Activated T-helper 2 cell treated with anti-CD3 and anti-CD28 coated beads, Interferon-gamma antibody, Interleukin-2, Interleukin-4, amounts not matched to agents 10 μg/mL and 5 μg/mL and 100 μg/mL, durations not matched to agents 14 hours and 24 hours and 36 hours (primary cell): ENCODE measurements at regions of chr4 and their contacts with region 1.

Region 1: DNA sequence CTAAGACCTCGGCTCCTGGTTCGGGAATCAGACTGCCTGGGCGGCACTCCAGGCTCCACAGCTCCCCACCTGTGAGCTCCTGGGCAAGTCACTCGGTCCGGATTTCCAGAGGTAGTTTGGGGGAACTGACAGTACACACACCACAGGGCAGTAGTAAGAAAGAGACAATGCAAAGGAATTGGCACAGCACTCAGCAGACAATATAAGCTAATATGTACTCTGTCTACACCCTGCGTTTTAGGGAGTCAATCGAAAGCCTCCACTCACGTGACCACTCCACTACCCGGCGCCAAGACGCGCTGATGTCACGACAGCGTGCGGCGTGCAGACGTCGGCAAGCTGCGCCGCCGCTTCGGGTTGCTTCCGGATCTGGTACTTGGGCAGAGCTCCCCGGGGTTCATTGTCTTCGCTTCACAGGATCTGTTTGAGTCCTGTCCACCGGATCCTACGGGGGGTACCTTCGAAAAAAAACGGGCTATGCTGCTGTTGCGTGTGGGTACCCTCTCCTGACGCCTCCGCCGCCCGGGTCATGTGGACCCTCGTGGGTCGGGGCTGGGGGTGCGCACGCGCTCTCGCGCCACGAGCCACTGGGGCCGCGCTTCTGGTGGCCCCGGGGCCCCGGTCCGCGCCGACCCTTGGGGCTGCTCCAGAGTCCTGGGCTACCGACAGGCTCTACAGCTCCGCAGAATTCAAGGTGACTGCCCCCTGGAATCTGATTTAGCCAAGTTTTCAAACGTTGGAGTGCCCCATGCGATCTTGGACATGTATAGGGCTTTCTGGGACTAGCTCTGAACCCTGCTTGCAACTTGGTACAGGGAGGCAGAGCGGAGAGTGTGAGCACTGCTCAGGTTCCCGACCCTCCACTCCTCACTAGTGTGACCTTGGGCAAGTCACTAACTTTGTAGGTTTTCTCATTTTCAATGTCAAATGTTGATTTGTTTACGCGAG is at the start of gene GUF1:
- DNase-seq: peak; percentile 87
- H3K4me3 Mint-ChIP-seq: peak within 1 kb of the TSS; percentile 94
- H3K27ac Mint-ChIP-seq: peak within 1 kb of the TSS; percentile 97
- H3K4me1 Mint-ChIP-seq: peaks cover 31% of the 10 kb centered on the region
- H3K27me3 Mint-ChIP-seq: peaks cover 2% of the 10 kb centered on the region
- total RNA-seq, gene GUF1: 30.7 and 33.2 TPM in 2 replicates

Region 2: DNA sequence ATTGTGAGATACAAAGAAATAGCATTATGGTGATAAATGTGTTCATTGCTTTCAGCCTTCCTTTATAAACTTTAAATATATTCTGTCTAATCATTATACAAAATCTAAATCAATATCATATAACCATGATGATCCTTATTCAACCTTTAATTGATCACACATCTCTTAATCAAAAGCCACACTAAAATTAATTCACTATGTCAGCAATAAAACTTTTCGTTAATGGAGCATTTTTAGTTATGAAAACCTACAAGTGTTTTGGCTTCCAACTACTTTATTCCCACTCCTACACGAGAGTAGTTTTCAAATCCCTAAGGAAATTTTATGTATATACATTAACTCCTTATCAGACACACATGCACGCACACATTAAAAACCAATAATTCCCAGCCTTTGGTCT is 760.0 kb before region 1 on chr4:
- intact Hi-C with region 1: no loop called
- DNase-seq: no peak
- H3K4me3 Mint-ChIP-seq: no peak overlapping the region
- H3K27ac Mint-ChIP-seq: no peak overlapping the region
- H3K4me1 Mint-ChIP-seq: no peaks in the 10 kb centered on the region
- H3K27me3 Mint-ChIP-seq: no peaks in the 10 kb centered on the region

Region 3: DNA sequence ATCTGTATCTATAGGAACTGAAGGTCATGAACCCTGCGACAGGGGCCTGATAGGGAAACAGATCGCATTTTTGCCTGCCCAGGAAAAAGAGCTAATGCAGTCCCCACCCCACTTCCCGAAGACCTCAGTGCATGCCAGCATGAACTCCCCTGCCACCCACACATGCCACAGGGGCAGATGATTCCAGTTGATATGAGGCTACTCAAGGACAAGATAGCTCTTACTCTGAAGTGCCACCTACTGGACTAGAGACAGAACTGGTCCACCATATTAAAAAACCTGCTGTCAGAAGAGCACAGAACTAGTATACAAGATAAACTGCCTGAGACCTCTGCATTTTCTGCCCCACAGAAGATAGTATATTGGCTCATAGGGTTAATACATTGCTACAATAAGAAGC is 95.0 kb before region 1 on chr4:
- intact Hi-C with region 1: no loop called
- DNase-seq: no peak
- H3K4me3 Mint-ChIP-seq: no peak overlapping the region
- H3K27ac Mint-ChIP-seq: no peak overlapping the region
- H3K4me1 Mint-ChIP-seq: no peaks in the 10 kb centered on the region
- H3K27me3 Mint-ChIP-seq: no peaks in the 10 kb centered on the region

Region 4: DNA sequence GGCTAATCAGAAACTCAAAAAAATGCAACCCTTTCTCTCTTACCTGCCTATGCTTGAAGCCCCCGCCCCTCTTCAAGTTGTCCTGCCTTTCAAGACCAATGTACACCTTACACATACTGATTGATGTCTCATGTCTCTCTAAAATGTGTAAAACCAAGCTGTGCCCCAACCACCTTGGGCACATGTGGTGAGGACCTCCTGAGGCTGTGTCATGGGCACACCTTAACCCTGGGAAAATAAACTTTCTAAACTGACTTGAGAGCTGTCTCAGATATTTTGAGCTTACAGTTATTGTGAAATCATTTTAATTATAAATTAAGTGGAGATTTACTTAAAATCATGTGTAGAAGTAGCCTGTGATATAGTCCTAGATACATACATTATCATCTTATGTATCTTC is 22.1 kb after region 1 on chr4:
- intact Hi-C with region 1: loop called (anchors 2 kb)
- DNase-seq: no peak
- H3K4me3 Mint-ChIP-seq: no peak overlapping the region
- H3K27ac Mint-ChIP-seq: no peak overlapping the region
- H3K4me1 Mint-ChIP-seq: peaks cover 5% of the 10 kb centered on the region
- H3K27me3 Mint-ChIP-seq: no peaks in the 10 kb centered on the region

Region 5: DNA sequence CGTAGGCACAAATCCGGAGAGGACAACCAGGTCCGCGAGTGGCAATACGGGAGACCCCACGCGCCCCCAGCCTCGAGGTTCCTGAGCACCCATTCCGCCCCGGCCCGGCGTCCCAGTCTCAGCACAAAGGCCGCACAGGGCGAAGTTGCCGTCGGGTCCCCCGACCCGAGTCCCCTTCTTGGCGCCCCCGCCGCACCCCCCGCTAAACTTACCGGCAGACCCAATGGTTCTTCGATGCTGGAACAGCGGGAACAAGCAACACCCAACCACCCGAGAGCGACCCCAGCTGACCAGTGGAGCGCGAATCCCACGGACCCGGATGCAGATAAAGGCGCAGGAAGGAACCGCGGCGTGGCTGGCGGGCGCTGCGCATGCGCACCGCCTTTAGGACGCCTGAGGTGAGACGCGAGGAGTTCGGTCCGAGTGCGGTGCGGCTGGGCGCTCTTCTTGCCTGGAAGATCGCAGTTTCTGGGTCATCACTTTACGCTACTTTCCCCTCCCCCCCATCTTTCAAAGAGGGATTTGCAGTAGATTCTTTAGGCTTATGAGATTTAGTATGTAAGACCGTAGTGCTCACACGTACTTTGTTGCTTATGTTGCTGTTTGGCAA is 48.0 kb after region 1 on chr4 and contains the start of gene GNPDA2:
- intact Hi-C with region 1: loop called (anchors 1 kb)
- DNase-seq: peak; percentile 76
- H3K4me3 Mint-ChIP-seq: peak within 1 kb of the TSS; percentile 98
- H3K27ac Mint-ChIP-seq: peak within 1 kb of the TSS; percentile 72
- H3K4me1 Mint-ChIP-seq: peaks cover 24% of the 10 kb centered on the region
- H3K27me3 Mint-ChIP-seq: peaks cover under 1% of the 10 kb centered on the region
- total RNA-seq, gene GNPDA2: 13.3 and 16.6 TPM in 2 replicates

Region 6: GRCh38 chr4:44965435-44966095 is 287.2 kb after region 1 on chr4:
- intact Hi-C with region 1: no loop called
- DNase-seq: no peak
- H3K4me3 Mint-ChIP-seq: no peak overlapping the region
- H3K27ac Mint-ChIP-seq: no peak overlapping the region
- H3K4me1 Mint-ChIP-seq: no peaks in the 10 kb centered on the region
- H3K27me3 Mint-ChIP-seq: no peaks in the 10 kb centered on the region